Left colon (tissue), 2 donors: ENCODE measurements at regions of chr3 and their contacts with region 1.

Region 1: GRCh38 chr3:33644582-33644981 is 73.5 kb downstream of the CLASP2 start:
- DNase-seq: no peak
- ATAC-seq: no peak

Region 2: GRCh38 chr3:33537133-33537532 is 107.4 kb before region 1 on chr3:
- intact Hi-C with region 1: no loop called
- DNase-seq: no peak
- ATAC-seq: no peak

Region 3: GRCh38 chr3:33717866-33718594 is 73.4 kb after region 1 on chr3 and contains the start of gene CLASP2:
- intact Hi-C with region 1: loop called in 1 of 2 experiments (anchors 5 kb)
- DNase-seq: peak; percentile 86 to 90
- ATAC-seq: peak; percentile 93
- total RNA-seq, gene CLASP2: 37.2 to 41.2 TPM